K562 (cell line): ENCODE measurements at regions of chr4 and their contacts with region 1.

Region 1: DNA sequence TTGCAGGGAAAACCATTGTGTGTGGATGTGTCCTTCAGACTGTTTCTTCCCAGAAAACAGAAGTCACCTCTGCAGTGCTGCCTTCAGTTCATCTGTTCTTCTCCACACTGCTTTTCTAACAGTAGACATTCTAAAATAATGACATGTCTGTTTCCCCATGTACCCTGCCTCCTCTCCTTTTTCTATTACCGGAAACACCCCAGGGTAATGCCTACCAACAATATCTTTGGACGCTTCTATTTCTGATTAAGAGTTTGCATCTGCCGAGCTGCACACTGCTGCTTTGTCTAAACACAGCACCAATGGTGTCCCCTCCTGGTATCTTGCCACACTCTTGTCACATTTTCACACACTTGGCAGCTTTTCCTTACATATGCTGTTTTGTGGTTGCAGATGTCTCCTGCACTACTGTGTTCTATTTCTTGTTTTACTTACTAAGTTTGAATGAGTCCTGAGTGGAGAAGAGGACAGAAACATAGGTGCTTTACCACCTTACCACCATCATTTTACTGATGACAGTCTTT is 288.8 kb downstream of the GRIA2 start:
- DNase-seq: no peak
- ATAC-seq: no peak
- H3K4me3 ChIP-seq: no peak overlapping the region
- H3K27ac ChIP-seq: no peak overlapping the region
- H3K4me1 ChIP-seq: no peaks in the 10 kb centered on the region
- H3K27me3 ChIP-seq: no peaks in the 10 kb centered on the region
- CTCF ChIP-seq: no peak
- EP300 ChIP-seq: no peak
- POLR2A ChIP-seq: no peak
- RAD21 ChIP-seq: no peak

Region 2: DNA sequence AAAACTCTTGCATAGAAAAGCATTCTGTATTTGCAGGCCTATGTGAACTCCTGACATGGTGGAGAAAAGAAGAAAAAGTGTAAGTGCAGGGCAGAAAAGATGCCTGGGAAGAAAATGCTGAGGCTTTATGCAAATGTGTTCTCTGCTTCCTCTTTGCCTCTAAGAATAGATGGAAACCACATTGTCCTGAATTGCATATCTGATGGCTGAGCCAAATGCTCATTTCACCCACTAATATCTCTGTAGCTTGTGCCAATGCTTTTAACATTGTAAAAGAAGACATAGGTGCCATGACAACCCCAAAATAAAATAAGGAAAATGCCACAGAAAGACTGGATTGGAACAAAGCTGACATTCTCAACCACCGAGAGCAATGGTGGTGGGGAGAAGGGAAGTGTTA is 18.6 kb after region 1 on chr4:
- CTCF ChIA-PET with region 1: no interaction called
- POLR2A ChIA-PET with region 1: no interaction called
- in situ Hi-C with region 1: no loop called
- intact Hi-C with region 1: loop called (anchors 1 kb)
- DNase-seq: no peak
- ATAC-seq: no peak
- H3K4me3 ChIP-seq: no peak overlapping the region
- H3K27ac ChIP-seq: no peak overlapping the region
- H3K4me1 ChIP-seq: no peaks in the 10 kb centered on the region
- H3K27me3 ChIP-seq: no peaks in the 10 kb centered on the region
- CTCF ChIP-seq: no peak
- EP300 ChIP-seq: no peak
- POLR2A ChIP-seq: no peak
- RAD21 ChIP-seq: no peak

Region 3: GRCh38 chr4:158302076-158302866 is 792.9 kb after region 1 on chr4:
- CTCF ChIA-PET with region 1: no interaction called
- POLR2A ChIA-PET with region 1: no interaction called
- in situ Hi-C with region 1: no loop called
- intact Hi-C with region 1: no loop called
- DNase-seq: no peak
- ATAC-seq: no peak
- H3K4me3 ChIP-seq: no peak overlapping the region
- H3K27ac ChIP-seq: no peak overlapping the region
- H3K4me1 ChIP-seq: no peaks in the 10 kb centered on the region
- H3K27me3 ChIP-seq: no peaks in the 10 kb centered on the region
- CTCF ChIP-seq: no peak
- EP300 ChIP-seq: no peak
- POLR2A ChIP-seq: no peak
- RAD21 ChIP-seq: no peak